Heart right ventricle (tissue), 16 donors: ENCODE measurements at regions of chr13 and their contacts with region 1.

Region 1: DNA sequence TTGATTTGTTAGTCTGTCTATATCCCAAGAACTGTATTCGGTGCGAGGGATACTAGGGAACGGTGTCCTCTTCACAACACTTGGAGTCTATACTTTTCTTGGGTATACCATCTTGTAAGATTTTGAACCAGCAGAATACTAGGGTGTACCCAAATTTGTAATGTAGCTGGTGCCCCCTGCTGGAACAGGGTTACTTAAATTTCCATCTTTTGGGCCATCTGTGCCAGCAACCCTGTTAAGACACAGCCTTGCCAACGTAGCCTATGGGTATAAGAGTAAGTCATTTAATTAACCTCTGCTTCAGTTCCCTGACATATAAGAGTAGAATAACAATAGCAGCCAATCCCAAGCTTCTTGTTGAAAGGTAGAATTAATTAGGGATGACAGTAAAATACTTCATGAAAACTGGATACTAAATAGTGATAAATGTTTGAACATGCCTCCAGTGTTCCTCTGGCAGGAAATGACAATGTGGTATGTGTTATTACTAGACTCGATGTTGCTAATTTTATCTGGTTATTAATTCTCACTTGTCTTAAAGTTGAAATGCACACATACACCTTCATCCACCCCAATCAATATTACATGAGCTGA is 607.6 kb downstream of the FGF9 start:
- DNase-seq: peak; percentile 17 to 55
- ATAC-seq: peak in 2 of 8 donors; percentile 39 to 65
- H3K4me3 ChIP-seq: no peak overlapping the region
- H3K27ac ChIP-seq: no peak overlapping the region
- H3K4me1 ChIP-seq: peaks cover 0 to 3% (median 0%) of the 10 kb centered on the region in 9 donors
- H3K27me3 ChIP-seq: no peaks in the 10 kb centered on the region
- CTCF ChIP-seq: peak in 8 of 9 donors; percentile 23 to 59 (median 50)

Region 2: GRCh38 chr13:21849323-21849722 is 429.1 kb before region 1 on chr13:
- intact Hi-C with region 1: loop called in 1 of 10 experiments (anchors 10 kb)
- DNase-seq: no peak
- ATAC-seq: peak; percentile 42 to 78 (median 68)
- H3K4me3 ChIP-seq: no peak overlapping the region
- H3K27ac ChIP-seq: no peak overlapping the region
- H3K4me1 ChIP-seq: peaks cover 0 to 12% (median 0%) of the 10 kb centered on the region in 9 donors
- H3K27me3 ChIP-seq: no peaks in the 10 kb centered on the region
- CTCF ChIP-seq: peak; percentile 23 to 61 (median 58)

Region 3: DNA sequence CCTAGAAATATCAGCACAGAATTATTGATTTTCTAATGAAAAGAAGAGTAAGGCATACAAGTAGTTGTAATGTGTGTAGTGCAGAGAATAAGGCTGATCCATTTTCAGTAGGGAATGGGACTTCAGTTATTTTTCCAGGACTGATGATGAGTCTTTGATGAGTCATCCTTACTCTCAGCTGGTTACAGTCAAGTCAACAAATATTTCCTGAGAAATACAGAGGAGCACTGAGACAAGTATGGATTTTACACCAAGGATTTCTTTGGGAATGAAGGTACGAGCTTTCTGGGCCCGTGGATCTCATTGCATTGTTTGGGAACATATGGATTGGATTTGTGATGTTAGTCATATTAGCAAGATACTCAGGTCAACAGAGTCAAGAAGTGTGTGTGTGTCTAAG is 104.8 kb before region 1 on chr13:
- intact Hi-C with region 1: loop called in 1 of 10 experiments (anchors 5 kb)
- DNase-seq: no peak
- ATAC-seq: peak in 1 of 8 donors; percentile 31
- H3K4me3 ChIP-seq: no peak overlapping the region
- H3K27ac ChIP-seq: no peak overlapping the region
- H3K4me1 ChIP-seq: no peaks in the 10 kb centered on the region
- H3K27me3 ChIP-seq: no peaks in the 10 kb centered on the region
- CTCF ChIP-seq: no peak